ENCODE measurements at regions of chr4 and their contacts with region 1.

Region 1: GRCh38 chr4:122787940-122788339 is 38.7 kb upstream of the FGF2 start:
- DNase-seq: no peak
- H3K4me3 Mint-ChIP-seq: no peak overlapping the region
- H3K27ac Mint-ChIP-seq: no peak overlapping the region
- H3K4me1 Mint-ChIP-seq: peaks cover 26% of the 10 kb centered on the region
- H3K27me3 Mint-ChIP-seq: peaks cover 1% of the 10 kb centered on the region

Region 2: DNA sequence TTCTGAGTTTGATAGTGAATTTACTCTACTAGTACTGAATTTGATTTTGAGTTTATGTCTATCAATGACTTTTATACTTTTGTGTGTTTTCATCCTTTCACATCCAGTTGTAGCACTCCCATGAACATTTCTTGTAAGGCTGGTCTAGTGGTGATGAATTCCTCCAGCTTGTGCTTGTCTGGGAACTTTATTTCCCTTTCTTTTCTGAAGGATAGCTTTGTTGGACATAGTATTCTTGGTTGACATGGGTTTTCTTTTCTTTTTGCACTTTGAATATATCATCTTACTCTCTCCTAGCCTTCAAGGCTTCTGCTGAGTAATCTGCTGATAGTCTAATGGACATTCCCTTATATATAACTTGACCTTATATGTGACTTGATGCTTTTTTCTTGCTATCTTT is 298.9 kb before region 1 on chr4:
- intact Hi-C with region 1: no loop called
- DNase-seq: no peak
- H3K4me3 Mint-ChIP-seq: no peak overlapping the region
- H3K27ac Mint-ChIP-seq: no peak overlapping the region
- H3K4me1 Mint-ChIP-seq: no peaks in the 10 kb centered on the region
- H3K27me3 Mint-ChIP-seq: peaks cover 4% of the 10 kb centered on the region

Region 3: GRCh38 chr4:122814426-122814825 is 26.5 kb after region 1 on chr4:
- intact Hi-C with region 1: loop called (anchors 2 kb)
- DNase-seq: no peak
- H3K4me3 Mint-ChIP-seq: no peak overlapping the region
- H3K27ac Mint-ChIP-seq: no peak overlapping the region
- H3K4me1 Mint-ChIP-seq: peaks cover 9% of the 10 kb centered on the region
- H3K27me3 Mint-ChIP-seq: peaks cover 23% of the 10 kb centered on the region